Left colon (tissue), 2 donors: ENCODE measurements at regions of chr6 and their contacts with region 1.

Region 1: GRCh38 chr6:40492187-40492586 is 95.0 kb downstream of the LRFN2 start:
- DNase-seq: no peak
- ATAC-seq: no peak

Region 2: DNA sequence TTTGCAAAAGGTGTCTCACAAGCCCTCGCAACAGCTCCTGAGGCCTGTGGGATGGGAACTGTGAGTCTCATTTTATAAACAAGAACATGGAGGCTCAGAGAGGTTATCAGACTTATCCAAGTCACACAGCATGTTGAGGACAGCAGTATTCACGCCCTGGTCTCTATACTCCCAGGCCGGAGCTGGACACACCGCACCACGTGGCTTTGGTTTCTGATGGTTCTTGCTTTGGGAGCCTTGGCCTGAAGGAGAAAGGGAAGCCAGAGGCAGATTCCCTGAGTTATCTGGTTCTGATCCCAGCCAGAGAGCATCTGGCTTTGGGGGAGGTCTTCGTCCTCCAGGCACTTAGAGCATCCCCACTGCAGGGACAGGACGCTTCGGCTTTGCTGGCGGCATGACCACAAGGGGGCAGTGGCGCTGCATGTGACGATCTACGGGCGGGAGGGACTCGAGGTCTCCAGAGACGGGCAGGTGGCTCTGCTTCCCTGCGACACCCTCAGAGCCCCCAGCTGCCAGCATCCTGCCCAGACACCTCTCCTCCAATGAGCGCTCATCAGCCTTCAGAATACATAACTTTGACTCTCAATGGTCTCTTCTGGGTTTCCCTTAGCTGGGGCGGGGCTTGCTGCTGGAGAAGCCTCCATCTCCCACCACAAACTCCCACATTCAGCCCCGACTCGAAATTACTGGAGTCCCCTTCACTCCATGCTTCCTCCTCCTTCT is 1325.8 kb before region 1 on chr6:
- intact Hi-C with region 1: loop called in 1 of 2 experiments (anchors 10 kb)
- DNase-seq: peak; percentile 69 to 89
- ATAC-seq: peak; percentile 66